OCI-LY7 (cell line): ENCODE measurements at regions of chr5 and their contacts with region 1.

Region 1: GRCh38 chr5:10601246-10602030 is 37.6 kb downstream of the ANKRD33B start:
- DNase-seq: peak; percentile 35
- H3K4me3 ChIP-seq: peak overlapping the region; percentile 47
- H3K27ac ChIP-seq: peak overlapping the region; percentile 91
- H3K4me1 ChIP-seq: peaks cover 74% of the 10 kb centered on the region
- CTCF ChIP-seq: no peak

Region 2: GRCh38 chr5:10505517-10506095 is 95.8 kb before region 1 on chr5:
- CTCF ChIA-PET with region 1: no interaction called
- POLR2A ChIA-PET with region 1: no interaction called
- intact Hi-C with region 1: loop called (anchors 5 kb)
- DNase-seq: peak; percentile 86
- H3K4me3 ChIP-seq: no peak overlapping the region
- H3K27ac ChIP-seq: peak overlapping the region; percentile 43
- H3K4me1 ChIP-seq: peaks cover 25% of the 10 kb centered on the region
- CTCF ChIP-seq: no peak

Region 3: GRCh38 chr5:10635257-10635866 is 33.9 kb after region 1 on chr5:
- CTCF ChIA-PET with region 1: no interaction called
- POLR2A ChIA-PET with region 1: no interaction called
- intact Hi-C with region 1: no loop called
- DNase-seq: peak; percentile 59
- H3K4me3 ChIP-seq: no peak overlapping the region
- H3K27ac ChIP-seq: peak overlapping the region; percentile 14
- H3K4me1 ChIP-seq: peaks cover 53% of the 10 kb centered on the region
- CTCF ChIP-seq: no peak

Region 4: GRCh38 chr5:10885026-10885425 is 283.6 kb after region 1 on chr5:
- CTCF ChIA-PET with region 1: no interaction called
- POLR2A ChIA-PET with region 1: no interaction called
- intact Hi-C with region 1: no loop called
- DNase-seq: no peak
- H3K4me3 ChIP-seq: no peak overlapping the region
- H3K27ac ChIP-seq: no peak overlapping the region
- H3K4me1 ChIP-seq: no peaks in the 10 kb centered on the region
- CTCF ChIP-seq: no peak

Region 5: DNA sequence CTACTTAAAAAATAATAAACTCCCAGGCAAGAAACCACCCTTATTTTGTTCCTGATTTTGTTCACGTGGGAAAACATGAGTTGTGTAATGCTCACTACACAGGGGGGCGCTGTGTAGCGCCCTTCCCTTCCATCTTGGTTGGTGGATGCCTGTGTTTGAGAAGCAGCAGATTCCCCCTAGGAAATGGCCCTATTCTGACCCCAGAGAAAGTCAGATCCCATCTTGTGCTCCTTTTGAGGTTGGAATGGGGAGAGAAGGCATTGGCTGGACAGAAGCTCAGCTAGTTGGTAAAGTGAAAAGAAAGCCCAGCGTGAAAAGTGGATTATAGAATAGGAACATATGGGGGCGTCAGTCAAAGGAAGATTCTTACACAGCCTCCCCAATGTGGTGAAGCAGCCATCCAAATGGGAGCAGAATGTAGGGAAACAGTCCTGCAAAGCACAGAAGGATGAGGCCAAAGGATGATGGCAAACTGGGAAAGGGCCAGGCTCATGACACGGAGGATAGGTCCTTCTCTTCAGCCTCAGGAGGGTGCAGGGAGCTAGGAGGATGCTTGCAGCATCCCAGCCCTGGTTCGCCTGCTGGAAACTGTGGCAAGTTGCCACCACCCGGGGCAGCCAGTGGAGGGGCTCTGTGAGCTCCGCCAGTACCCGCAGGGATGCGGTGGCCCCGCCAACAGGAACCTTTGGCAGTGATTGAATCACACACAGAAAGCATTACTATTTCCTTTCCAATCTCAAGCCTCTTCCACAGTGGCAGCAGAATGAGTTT is 473.8 kb after region 1 on chr5:
- CTCF ChIA-PET with region 1: no interaction called
- POLR2A ChIA-PET with region 1: no interaction called
- intact Hi-C with region 1: no loop called
- DNase-seq: no peak
- H3K4me3 ChIP-seq: no peak overlapping the region
- H3K27ac ChIP-seq: no peak overlapping the region
- H3K4me1 ChIP-seq: no peaks in the 10 kb centered on the region
- CTCF ChIP-seq: peak; percentile 63